WTC11 (cell line): ENCODE measurements at regions of chr1 and their contacts with region 1.

Region 1: DNA sequence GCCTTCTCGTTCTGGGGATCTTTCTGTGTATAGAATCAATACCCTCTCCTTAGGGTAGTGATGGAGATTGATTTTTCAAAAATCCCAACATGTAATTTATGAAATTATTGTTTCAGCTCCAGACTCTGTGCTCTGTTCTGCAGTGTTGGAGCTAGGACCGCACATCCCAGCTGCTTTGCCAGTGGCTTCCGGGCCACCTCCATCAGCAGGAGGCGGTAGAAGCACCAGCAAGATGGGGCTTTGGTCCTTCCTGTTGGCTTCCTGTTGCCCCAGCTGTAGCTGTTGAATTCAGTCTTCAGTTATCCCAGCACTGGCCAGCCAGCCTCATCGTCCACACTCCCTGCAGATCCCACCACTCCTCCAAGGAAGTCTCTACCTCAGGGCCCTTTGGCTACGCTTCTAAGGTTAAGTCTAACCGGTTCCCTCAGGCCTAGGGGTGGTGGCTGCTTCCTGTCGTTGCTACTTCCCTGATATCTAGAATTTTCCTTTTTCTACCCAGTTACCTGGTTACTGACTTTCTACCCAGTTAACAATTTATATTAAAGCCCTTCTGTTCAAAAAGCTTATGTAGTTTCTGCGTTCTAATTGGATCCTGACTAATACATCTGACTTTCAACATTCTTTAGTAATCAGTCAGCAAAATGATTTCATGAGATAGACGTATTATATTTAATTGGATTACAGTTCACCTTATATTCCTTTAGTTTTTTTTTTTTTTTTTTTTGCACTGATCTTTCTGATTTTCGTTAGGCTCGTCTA is 24.6 kb downstream of the GALNT2 start:
- DNase-seq: no peak
- ATAC-seq: no peak; the same call in 1 of the 2 replicates
- H3K4me3 Mint-ChIP-seq: no peak overlapping the region
- H3K27ac Mint-ChIP-seq: no peak overlapping the region
- H3K4me1 Mint-ChIP-seq: peaks cover 24% of the 10 kb centered on the region
- H3K27me3 Mint-ChIP-seq: no peaks in the 10 kb centered on the region
- CTCF ChIP-seq: no peak

Region 2: GRCh38 chr1:229986737-229987337 is 104.8 kb before region 1 on chr1:
- CTCF ChIA-PET with region 1: no interaction called
- POLR2A ChIA-PET with region 1: interaction called, 10 read pairs
- DNase-seq: no peak
- ATAC-seq: no peak
- H3K4me3 Mint-ChIP-seq: no peak overlapping the region
- H3K27ac Mint-ChIP-seq: no peak overlapping the region
- H3K4me1 Mint-ChIP-seq: no peaks in the 10 kb centered on the region
- H3K27me3 Mint-ChIP-seq: no peaks in the 10 kb centered on the region; the same call in 1 of the 2 replicates
- CTCF ChIP-seq: no peak